Stomach (tissue), 19 donors: ENCODE measurements at regions of chr13 and their contacts with region 1.

Region 1: DNA sequence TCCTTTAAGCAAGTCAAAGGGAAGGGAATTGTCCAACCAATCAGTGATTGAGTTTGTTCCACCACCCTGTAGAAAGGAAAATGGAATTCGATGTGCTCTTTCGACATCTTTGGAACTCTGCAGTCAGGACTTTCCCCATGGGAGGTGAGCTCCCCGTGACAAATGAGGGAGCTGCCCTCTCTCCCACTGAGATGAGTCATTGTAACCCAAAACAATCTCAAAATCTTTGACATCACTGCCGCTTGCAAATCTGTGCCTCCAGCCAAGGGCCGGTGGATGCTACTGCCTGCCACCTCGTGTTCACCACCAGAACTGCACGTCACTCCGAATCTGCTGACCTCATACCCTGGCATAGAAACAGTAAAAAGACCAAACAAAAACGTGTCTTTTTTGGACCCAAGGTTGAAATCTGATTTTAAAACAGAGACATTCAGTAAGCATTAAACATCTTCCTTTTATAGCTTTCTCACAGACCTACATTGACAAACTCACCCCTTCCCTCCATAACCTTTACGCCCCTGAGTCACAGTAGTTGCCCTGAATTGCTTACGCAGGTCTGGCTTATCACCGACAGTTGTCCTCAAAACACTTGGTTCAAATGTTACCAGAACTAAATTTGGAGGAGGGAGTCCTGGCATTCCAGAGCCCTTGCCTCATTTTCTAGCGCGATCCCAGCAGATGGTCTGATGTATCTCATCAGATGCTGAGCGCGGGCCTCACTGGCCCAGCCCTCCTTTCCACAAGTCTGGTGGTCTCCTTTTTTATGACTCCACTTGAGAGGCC is 105.2 kb downstream of the COL4A2 start:
- DNase-seq: peak; percentile 74 to 93
- H3K4me3 ChIP-seq: no peak overlapping the region
- H3K27ac ChIP-seq: peak overlapping the region; percentile 51 to 92 (median 83)
- H3K4me1 ChIP-seq: peaks cover 6 to 72% (median 39%) of the 10 kb centered on the region in 4 donors
- H3K27me3 ChIP-seq: no peaks in the 10 kb centered on the region
- CTCF ChIP-seq: peak in 5 of 7 experiments; percentile 83 to 96 (median 88)
- EP300 ChIP-seq: peak; percentile 94
- POLR2A ChIP-seq: no peak

Region 2: DNA sequence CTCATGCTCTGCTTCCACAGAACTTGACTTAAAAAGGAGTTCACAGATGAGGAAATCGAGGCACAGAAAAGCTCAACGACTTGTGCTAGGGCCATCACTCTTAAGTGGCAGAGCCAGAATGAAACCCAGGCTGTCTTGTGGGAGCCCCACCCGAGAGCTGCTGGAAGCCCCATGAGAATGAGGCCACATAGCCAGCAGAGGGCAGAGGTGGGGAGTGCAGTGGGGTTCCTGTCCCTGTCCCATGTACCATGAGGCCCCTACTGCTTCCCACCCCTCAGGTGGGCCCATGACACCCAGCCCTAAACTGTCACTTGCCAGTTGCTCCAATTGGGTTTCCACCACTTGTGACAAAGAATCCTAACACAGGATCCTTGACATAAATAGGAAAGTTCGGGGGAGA is 801.8 kb before region 1 on chr13:
- intact Hi-C with region 1: no loop called
- DNase-seq: peak; percentile 44 to 48
- H3K4me3 ChIP-seq: no peak overlapping the region
- H3K27ac ChIP-seq: no peak overlapping the region
- H3K4me1 ChIP-seq: no peaks in the 10 kb centered on the region
- H3K27me3 ChIP-seq: no peaks in the 10 kb centered on the region
- CTCF ChIP-seq: peak in 2 of 7 experiments; percentile 12 to 26
- EP300 ChIP-seq: no peak
- POLR2A ChIP-seq: no peak

Region 3: DNA sequence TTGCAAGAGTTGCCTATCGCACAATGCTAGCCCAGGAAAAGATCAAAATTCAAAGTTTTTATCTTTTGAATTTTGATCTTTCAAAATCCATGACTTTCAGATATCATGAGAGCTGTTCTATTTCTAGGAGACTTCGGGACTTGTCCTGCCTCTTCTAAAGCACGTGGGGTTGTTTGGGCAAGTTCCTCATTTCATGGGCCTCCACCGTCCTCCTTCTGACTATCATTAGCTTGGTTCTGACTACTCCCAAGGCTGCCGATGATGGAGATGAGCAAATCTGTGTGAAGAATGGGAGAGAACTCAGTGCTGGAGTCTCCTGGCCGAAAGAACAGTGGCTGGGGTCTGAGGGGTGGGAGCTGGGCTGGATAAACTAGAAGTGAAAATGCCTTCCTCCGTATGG is 191.9 kb before region 1 on chr13:
- intact Hi-C with region 1: loop called (anchors 5 kb)
- DNase-seq: no peak
- H3K4me3 ChIP-seq: no peak overlapping the region
- H3K27ac ChIP-seq: peak overlapping the region in 4 of 5 donors; percentile 79 to 92 (median 82)
- H3K4me1 ChIP-seq: peaks cover 8 to 49% (median 25%) of the 10 kb centered on the region in 4 donors
- H3K27me3 ChIP-seq: peaks cover 0 to 5% (median 0%) of the 10 kb centered on the region in 3 donors
- CTCF ChIP-seq: no peak
- EP300 ChIP-seq: no peak
- POLR2A ChIP-seq: no peak